Activated T-helper 1 cell treated with anti-CD3 and anti-CD28 coated beads, Interleukin-12 subunit alpha, Interleukin-12 subunit beta, Interleukin-2, Interleukin-4 antibody, amounts not matched to agents 30 ng/mL and 10 ng/mL and 1 ng/mL, durations not matched to agents 14 hours and 24 hours and 36 hours (primary cell): ENCODE measurements at regions of chr1 and their contacts with region 1.

Region 1: DNA sequence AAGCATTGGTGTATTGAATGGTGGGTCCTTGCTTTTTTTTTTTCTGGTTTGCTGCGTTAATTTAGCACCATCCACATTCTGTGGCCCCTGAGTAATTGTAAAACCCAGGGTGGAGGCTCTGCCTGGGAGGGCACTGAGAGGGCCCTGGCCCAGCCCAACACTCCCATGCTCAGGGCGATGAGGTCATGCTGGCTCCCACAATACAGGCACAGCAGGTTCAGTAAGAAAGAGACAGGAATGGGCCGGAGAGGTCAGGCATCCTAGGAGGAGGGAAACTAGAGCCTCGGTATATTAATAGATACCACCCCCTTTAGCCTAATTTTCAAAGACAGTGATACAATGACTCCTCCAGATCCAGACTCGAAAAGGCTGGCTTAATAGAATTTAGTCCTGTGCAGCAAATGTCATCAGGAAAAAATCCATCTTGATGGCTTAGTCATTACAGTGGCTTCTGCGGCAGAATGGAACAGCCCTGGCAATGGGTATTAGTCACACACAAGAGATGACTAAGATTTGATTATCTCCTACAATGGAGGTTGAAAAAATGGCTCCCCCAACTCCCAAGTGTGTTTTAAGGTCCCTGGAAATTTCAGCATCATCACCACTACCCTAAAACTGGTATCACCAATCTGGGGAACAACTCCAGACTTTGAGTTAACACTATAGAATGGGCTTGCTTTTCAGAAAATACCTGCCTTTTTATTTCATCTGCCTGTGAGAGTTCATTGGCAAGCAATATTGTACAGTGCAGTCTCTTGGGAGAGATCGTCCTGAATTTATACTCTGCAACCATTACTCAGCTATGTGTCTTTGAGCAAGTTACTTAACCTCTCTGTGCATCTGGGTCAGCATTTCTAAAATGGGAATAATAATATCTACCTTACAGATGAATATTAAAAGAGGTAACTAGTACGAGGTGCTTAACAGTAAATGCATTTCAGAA is 43.9 kb upstream of the LYST start:
- DNase-seq: no peak
- H3K4me3 Mint-ChIP-seq: peak overlapping the region; percentile 41
- H3K27ac Mint-ChIP-seq: peak overlapping the region; percentile 60
- H3K4me1 Mint-ChIP-seq: peaks cover 37% of the 10 kb centered on the region
- H3K27me3 Mint-ChIP-seq: no peaks in the 10 kb centered on the region

Region 2: DNA sequence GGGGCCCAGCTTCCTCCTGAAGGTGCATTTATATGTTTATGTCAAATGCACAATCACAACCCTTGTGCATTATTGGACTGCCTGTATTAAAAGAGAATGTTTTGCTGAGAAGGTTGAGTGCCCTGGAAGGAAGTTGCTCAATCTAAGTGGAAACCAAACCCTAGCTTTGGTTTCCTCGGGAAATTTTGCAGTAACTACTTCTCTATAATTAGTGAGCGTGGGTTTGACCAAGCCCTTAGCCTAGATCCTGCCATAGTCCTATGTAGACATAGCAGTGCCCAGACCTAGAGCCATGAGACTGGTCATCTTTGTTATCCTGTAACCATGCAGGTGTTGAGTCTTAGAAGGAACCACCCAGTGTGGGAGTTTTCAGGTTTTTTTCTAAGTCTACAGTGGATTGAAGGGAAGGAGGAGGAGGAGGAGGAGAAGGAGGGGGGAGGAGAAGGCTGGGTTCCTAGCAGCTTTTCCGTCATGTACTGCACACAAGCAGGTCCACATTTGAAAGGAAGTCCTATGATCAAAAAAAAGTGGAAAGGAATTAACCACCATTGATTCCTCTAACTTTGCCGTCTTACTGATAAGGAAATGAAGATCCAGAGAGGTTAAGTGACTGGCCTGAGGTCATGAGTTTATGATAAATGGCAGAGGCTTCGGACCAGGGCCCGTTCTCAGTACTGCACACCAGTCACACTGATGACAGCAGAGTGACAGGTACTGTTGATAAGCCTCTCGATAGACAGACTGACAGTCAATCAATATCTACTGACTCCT is 28.3 kb after region 1 on chr1:
- intact Hi-C with region 1: loop called (anchors 2 kb)
- DNase-seq: peak; percentile 10
- H3K4me3 Mint-ChIP-seq: peak overlapping the region; percentile 42
- H3K27ac Mint-ChIP-seq: peak overlapping the region; percentile 84
- H3K4me1 Mint-ChIP-seq: peaks cover 52% of the 10 kb centered on the region
- H3K27me3 Mint-ChIP-seq: peaks cover 4% of the 10 kb centered on the region